Gastrocnemius medialis (tissue), 4 donors: ENCODE measurements at regions of chr15 and their contacts with region 1.

Region 1: DNA sequence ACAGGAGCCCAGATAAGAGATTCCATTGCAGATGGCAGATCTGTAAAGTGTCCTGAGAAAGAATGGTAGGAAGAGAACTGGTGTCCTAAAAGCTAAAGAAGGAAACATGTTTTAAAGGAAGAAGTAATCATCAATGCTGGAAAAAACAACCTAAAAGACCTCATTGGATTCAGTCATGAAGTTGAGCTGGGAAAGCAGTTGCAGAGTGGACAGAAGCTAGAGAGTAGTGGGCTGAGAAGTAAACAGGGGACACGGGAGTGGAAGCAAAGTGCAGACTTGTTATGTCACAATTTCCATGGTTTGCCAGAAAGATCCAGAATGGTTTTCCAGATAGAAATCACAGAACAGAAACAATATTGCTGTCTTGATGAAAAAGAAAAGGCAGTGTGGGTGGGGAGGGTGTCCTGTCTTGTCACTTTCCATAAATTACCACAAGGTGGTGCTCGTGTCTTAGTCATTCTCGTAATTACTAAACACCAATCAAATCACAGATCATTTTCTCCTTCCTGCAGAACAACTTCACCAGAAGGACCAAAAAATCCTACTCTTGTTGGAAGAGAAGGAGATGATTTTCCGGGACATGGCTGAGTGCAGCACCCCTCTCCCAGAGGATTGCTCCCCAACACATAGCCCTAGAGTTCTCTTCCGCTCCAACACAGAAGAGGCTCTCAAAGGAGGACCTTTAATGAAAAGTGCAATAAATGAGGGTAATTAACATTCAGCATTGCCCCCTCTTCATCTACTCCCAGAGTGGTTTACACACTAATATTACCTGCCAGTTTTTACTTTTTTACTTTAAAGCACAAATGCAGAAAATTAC is 64.5 kb downstream of the KLHL25 start:
- DNase-seq: no peak
- ATAC-seq: peak; percentile 45 to 65
- H3K4me3 ChIP-seq: no peak overlapping the region
- H3K27ac ChIP-seq: peak overlapping the region; percentile 53 to 82 (median 63)
- H3K4me1 ChIP-seq: peaks cover 4 to 9% of the 10 kb centered on the region in 2 donors
- H3K27me3 ChIP-seq: no peaks in the 10 kb centered on the region
- CTCF ChIP-seq: peak; percentile 73 to 82 (median 76)
- POLR2A ChIP-seq: no peak

Region 2: DNA sequence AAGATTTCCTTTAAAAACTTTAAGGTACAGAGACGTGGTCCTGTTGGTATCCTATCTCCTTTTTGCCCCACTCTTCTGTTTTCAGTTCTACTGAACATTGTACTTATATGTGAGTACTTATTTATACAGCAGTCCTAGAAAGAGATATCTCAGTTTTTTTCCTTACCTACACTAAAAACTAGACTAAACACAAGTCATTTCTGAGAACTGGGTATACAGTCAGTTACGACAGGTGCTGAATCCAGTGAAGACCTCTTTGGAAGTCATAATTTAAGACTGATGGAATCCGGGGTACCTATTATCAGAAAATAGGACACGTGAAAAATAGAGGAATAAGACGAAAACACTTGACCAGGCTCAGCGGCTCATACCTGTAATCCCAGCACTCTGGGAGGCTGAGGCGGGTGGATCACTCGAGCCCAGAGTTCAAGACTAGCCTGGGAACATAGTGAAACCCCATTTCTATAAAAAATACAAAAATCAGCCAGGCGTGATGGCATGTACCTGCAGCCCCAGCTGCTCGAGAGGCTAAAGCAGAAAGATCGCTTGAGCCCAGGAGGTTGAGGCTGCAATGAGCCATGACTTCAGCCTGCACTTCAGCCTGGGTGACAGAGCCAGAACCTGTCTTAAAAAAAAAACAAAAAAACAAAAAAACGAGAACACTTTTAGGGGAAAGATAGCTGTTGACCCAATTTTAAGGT is 11.8 kb before region 1 on chr15:
- in situ Hi-C with region 1: no loop called
- intact Hi-C with region 1: no loop called
- DNase-seq: no peak
- ATAC-seq: no peak
- H3K4me3 ChIP-seq: no peak overlapping the region
- H3K27ac ChIP-seq: peak overlapping the region; percentile 12 to 39 (median 24)
- H3K4me1 ChIP-seq: no peaks in the 10 kb centered on the region
- H3K27me3 ChIP-seq: no peaks in the 10 kb centered on the region
- CTCF ChIP-seq: no peak
- POLR2A ChIP-seq: no peak

Region 3: GRCh38 chr15:85742186-85742821 is 12.1 kb after region 1 on chr15:
- in situ Hi-C with region 1: no loop called
- intact Hi-C with region 1: loop called (anchors 2 kb)
- DNase-seq: no peak
- ATAC-seq: peak in 1 of 2 donors; percentile 79
- H3K4me3 ChIP-seq: no peak overlapping the region
- H3K27ac ChIP-seq: peak overlapping the region; percentile 6 to 63 (median 52)
- H3K4me1 ChIP-seq: peaks cover 10 to 18% of the 10 kb centered on the region in 2 donors
- H3K27me3 ChIP-seq: no peaks in the 10 kb centered on the region
- CTCF ChIP-seq: no peak
- POLR2A ChIP-seq: no peak

Region 4: GRCh38 chr15:85764649-85765277 is 34.6 kb after region 1 on chr15:
- in situ Hi-C with region 1: no loop called
- intact Hi-C with region 1: loop called (anchors 5 kb)
- DNase-seq: peak; percentile 48 to 70
- ATAC-seq: peak; percentile 85 to 86
- H3K4me3 ChIP-seq: no peak overlapping the region
- H3K27ac ChIP-seq: peak overlapping the region; percentile 69 to 77 (median 73)
- H3K4me1 ChIP-seq: peaks cover 43 to 47% of the 10 kb centered on the region in 2 donors
- H3K27me3 ChIP-seq: no peaks in the 10 kb centered on the region
- CTCF ChIP-seq: no peak
- POLR2A ChIP-seq: no peak